ENCODE measurements at regions of chr4 and their contacts with region 1.

Region 1: GRCh38 chr4:48141048-48141447 is 7.0 kb upstream of the TXK start:
- DNase-seq: peak; percentile 56
- H3K4me3 ChIP-seq: no peak overlapping the region
- H3K27ac ChIP-seq: no peak overlapping the region
- H3K4me1 ChIP-seq: peaks cover 12% of the 10 kb centered on the region
- H3K27me3 ChIP-seq: peaks cover 0 to 6% of the 10 kb centered on the region in 2 experiments
- CTCF ChIP-seq: peak; percentile 22 to 37
- POLR2A ChIP-seq: no peak

Region 2: DNA sequence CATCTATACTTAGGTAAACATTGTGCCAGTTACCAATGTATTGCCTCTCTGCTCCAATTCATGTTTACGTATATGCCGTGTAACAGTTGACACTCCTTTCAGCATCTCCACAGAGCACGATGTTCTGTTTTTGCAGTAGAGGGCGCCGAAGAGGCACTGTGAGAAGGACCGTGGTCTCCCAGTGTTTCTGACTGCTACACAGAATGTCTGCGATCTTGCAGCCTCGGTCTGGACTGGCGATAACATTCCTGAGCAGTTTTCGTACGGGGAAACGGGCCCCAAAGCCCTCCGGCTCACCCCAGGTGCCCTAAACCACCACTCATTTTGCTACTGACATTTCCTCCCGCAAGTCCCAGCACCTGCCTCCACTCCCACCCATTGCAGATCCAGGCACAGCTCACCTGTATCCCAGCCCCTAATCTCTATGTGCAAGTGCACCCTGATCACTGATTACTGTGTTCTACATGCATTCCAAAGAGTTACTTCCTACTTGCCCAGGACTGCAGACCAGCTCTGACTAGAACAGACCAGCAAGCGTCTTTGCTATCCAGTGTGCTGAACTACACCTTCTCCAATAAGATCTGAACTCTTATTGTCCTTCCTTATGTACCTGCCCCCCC is 214.3 kb before region 1 on chr4:
- CTCF ChIA-PET with region 1: no interaction called
- POLR2A ChIA-PET with region 1: no interaction called
- dilution Hi-C with region 1: no loop called
- intact Hi-C with region 1: loop called (anchors 10 kb)
- DNase-seq: peak; percentile 49
- H3K4me3 ChIP-seq: no peak overlapping the region
- H3K27ac ChIP-seq: no peak overlapping the region
- H3K4me1 ChIP-seq: peaks cover 3% of the 10 kb centered on the region
- H3K27me3 ChIP-seq: peaks cover 7 to 19% of the 10 kb centered on the region in 2 experiments
- CTCF ChIP-seq: peak; percentile 69
- POLR2A ChIP-seq: no peak

Region 3: DNA sequence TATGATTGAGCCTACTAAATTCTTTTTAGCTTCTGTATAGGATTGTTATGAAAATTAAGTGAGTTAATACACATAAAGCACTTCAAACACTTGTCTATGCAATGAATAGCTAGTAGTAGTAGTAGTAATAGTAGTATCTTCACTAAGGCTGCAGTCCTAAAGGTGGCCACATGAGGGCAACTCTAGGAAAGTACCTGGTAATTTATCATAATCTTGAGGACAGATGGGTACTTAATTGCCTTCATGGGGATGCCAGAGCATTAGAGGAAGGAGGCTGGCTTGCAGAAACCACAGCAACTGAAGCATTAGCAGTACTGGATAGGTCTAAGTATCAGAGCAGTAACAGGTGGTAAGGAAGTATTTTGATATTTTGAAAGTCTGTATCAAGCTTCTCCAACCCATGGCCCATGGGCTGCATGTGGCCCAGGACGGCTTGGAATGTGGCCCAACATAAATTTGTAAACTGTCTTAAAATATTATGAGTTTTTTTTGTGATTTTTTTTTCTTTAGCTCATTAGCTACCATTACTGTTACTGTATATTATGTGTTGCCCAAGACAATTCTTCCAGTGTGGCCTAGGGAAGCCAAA is 107.1 kb before region 1 on chr4:
- CTCF ChIA-PET with region 1: interaction called, 16 read pairs
- POLR2A ChIA-PET with region 1: no interaction called
- dilution Hi-C with region 1: no loop called
- intact Hi-C with region 1: loop called (anchors 1 kb)
- DNase-seq: peak; percentile 53
- H3K4me3 ChIP-seq: no peak overlapping the region
- H3K27ac ChIP-seq: no peak overlapping the region
- H3K4me1 ChIP-seq: no peaks in the 10 kb centered on the region
- H3K27me3 ChIP-seq: no peaks in the 10 kb centered on the region
- CTCF ChIP-seq: peak; percentile 48 to 53
- POLR2A ChIP-seq: no peak

Region 4: GRCh38 chr4:48109413-48110263 is 31.4 kb before region 1 on chr4:
- CTCF ChIA-PET with region 1: interaction called, 6 read pairs
- POLR2A ChIA-PET with region 1: no interaction called
- dilution Hi-C with region 1: no loop called
- intact Hi-C with region 1: loop called (anchors 2 kb)
- DNase-seq: peak; percentile 66
- H3K4me3 ChIP-seq: no peak overlapping the region
- H3K27ac ChIP-seq: no peak overlapping the region
- H3K4me1 ChIP-seq: no peaks in the 10 kb centered on the region
- H3K27me3 ChIP-seq: no peaks in the 10 kb centered on the region
- CTCF ChIP-seq: peak; percentile 44 to 53
- POLR2A ChIP-seq: no peak

Region 5: GRCh38 chr4:48162162-48162561 is 21.1 kb after region 1 on chr4:
- CTCF ChIA-PET with region 1: no interaction called
- POLR2A ChIA-PET with region 1: no interaction called
- dilution Hi-C with region 1: no loop called
- intact Hi-C with region 1: no loop called
- DNase-seq: no peak
- H3K4me3 ChIP-seq: no peak overlapping the region
- H3K27ac ChIP-seq: no peak overlapping the region
- H3K4me1 ChIP-seq: no peaks in the 10 kb centered on the region
- H3K27me3 ChIP-seq: peaks cover 0 to 1% of the 10 kb centered on the region in 2 experiments
- CTCF ChIP-seq: no peak
- POLR2A ChIP-seq: no peak

Region 6: DNA sequence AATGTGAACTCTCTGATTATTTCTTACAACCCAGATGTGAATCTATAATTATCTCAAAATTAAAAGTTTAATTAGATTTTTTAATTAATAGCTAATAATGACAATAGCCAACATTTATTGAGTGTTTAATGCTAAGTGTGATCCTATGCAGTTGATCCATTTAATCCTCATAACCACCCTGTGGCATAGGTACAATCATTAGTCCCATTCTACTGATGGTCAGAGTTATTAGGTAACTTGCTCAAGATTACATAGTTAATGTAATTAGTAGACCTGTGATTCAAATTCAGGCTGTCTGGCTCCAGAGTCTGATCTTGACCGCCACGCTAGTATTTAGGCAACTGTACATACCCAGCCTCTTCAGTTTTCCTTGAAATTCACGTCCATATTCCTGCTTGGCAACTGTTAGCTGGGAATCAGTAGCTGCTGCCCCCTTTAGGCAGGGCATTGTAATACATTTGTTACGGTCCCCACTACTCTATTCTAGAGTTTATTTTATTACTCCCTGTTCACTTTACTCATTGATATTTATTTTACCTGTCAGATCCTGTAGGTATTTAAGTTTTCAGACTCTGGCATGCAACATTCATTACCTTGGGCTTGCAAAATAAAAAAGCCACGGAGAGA is 149.2 kb after region 1 on chr4:
- CTCF ChIA-PET with region 1: no interaction called
- POLR2A ChIA-PET with region 1: no interaction called
- dilution Hi-C with region 1: no loop called
- intact Hi-C with region 1: loop called (anchors 5 kb)
- DNase-seq: peak; percentile 22
- H3K4me3 ChIP-seq: no peak overlapping the region
- H3K27ac ChIP-seq: no peak overlapping the region
- H3K4me1 ChIP-seq: no peaks in the 10 kb centered on the region
- H3K27me3 ChIP-seq: peaks cover 5 to 9% of the 10 kb centered on the region in 2 experiments
- CTCF ChIP-seq: peak; percentile 55 to 68
- POLR2A ChIP-seq: no peak